ENCODE measurements at regions of chr10 and their contacts with region 1.

Region 1: DNA sequence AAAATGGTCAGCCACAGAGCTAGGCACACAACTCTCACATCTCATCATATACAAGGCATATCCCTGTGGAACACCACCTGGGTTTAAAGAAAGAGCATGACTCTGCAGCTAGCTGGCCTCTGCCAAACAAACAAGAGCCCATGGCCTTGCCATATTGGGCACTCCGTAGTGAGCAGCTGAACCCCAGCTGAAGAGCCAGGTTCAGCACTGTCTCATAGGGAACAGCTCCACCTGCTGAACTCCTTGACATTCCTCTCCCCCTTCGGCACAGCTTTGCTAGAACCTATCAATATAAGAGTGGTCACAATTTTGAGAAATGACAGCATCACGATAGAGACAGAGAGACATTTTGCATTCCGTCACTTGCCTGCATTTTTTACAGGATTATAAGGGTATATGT is 20.0 kb downstream of the SORCS1 start:
- DNase-seq: no peak
- H3K4me3 ChIP-seq: no peak overlapping the region
- H3K27ac ChIP-seq: no peak overlapping the region
- H3K4me1 ChIP-seq: peaks cover 0 to 4% (median 2%) of the 10 kb centered on the region in 4 donors
- H3K27me3 ChIP-seq: no peaks in the 10 kb centered on the region
- CTCF ChIP-seq: peak in 2 of 4 experiments; percentile 21 to 25
- EP300 ChIP-seq: no peak
- POLR2A ChIP-seq: no peak

Region 2: DNA sequence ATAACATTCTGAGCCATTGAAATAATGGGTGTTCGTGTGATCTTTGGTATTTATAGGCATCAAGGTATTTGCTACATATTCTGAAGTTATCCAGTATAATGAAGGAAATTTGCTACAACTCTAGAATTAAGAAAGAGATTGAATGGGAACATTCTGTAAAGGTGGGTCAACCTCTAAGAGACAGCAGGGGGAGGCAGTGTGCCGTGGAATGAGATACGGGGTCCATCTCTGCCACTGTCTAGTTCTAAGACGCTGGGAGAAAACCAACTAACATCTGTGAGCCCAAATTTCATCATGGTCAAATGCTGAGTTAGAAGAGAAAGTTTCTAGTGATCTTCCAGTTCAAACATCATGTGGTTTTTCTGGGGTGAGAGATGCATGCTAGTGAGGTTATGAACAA is 348.9 kb before region 1 on chr10:
- intact Hi-C with region 1: loop called (anchors 5 kb)
- DNase-seq: peak; percentile 77
- H3K4me3 ChIP-seq: no peak overlapping the region
- H3K27ac ChIP-seq: no peak overlapping the region
- H3K4me1 ChIP-seq: peaks cover 0 to 15% (median 0%) of the 10 kb centered on the region in 4 donors
- H3K27me3 ChIP-seq: no peaks in the 10 kb centered on the region
- CTCF ChIP-seq: peak; percentile 34 to 65 (median 52)
- EP300 ChIP-seq: no peak
- POLR2A ChIP-seq: no peak

Region 3: DNA sequence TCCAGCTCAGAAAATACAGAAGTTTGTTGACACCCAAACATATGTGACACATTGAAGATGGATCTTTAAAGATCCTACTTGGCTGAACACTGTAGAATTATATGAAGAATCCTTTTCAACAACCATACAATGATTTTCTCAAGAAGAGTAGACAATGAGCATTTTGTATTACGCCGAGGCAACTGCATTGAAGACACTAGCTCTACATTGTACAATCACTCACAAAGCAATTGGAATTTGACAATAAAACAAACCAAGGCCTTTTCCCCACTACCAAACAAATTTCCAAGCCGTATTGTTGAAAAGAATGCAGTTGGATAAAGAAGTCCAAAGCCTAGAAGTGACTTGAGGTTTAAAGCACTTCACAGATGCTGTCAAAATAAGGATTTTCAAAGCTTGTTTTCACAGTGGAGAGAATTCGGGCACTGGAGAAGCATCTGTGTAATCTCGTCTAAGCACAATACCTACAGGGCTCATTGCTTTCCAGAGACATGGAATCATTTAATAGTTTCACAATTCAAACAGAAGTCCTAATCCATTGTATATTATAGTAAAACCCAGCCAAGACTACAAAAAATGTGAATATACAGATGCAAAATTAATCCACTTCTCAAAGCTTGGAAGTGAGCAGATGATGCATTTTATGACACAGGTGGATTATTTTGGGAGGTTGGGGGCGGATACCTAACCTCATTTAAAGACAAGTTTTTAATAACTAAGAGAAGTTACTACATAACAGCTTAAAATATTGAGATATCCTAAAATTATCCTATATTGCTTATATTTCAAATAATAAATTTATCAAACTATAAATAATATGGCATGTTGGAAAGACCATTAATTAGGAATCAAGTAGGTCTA is 58.6 kb before region 1 on chr10:
- intact Hi-C with region 1: loop called (anchors 2 kb)
- DNase-seq: no peak
- H3K4me3 ChIP-seq: no peak overlapping the region
- H3K27ac ChIP-seq: no peak overlapping the region
- H3K4me1 ChIP-seq: peaks cover 0 to 1% (median under 1%) of the 10 kb centered on the region in 4 donors
- H3K27me3 ChIP-seq: no peaks in the 10 kb centered on the region
- CTCF ChIP-seq: no peak
- EP300 ChIP-seq: no peak
- POLR2A ChIP-seq: no peak

Region 4: GRCh38 chr10:107317594-107317993 is 173.1 kb after region 1 on chr10:
- intact Hi-C with region 1: no loop called
- DNase-seq: no peak
- H3K4me3 ChIP-seq: no peak overlapping the region
- H3K27ac ChIP-seq: no peak overlapping the region
- H3K4me1 ChIP-seq: no peaks in the 10 kb centered on the region
- H3K27me3 ChIP-seq: no peaks in the 10 kb centered on the region
- CTCF ChIP-seq: no peak
- EP300 ChIP-seq: no peak
- POLR2A ChIP-seq: no peak